ENCODE measurements at regions of chr3 and their contacts with region 1.

Region 1: GRCh38 chr3:33440323-33441232 is at the start of gene UBP1:
- DNase-seq: peak; percentile 100
- H3K4me3 ChIP-seq: peak within 1 kb of the TSS; percentile 69 to 90 (median 77)
- H3K27ac ChIP-seq: peak within 1 kb of the TSS; percentile 95 to 98 (median 97)
- H3K4me1 ChIP-seq: peaks cover 0 to 44% (median 39%) of the 10 kb centered on the region in 4 donors
- H3K27me3 ChIP-seq: no peaks in the 10 kb centered on the region
- CTCF ChIP-seq: no peak
- EP300 ChIP-seq: no peak
- POLR2A ChIP-seq: peak; percentile 77 to 83
- total RNA-seq, gene UBP1: 58.4 to 92.0 (median 62.8) TPM

Region 2: GRCh38 chr3:33096093-33096868 is 344.3 kb before region 1 on chr3:
- intact Hi-C with region 1: loop called (anchors 5 kb)
- DNase-seq: no peak
- H3K4me3 ChIP-seq: peak overlapping the region; percentile 88 to 99 (median 96)
- H3K27ac ChIP-seq: peak overlapping the region; percentile 93 to 99 (median 98)
- H3K4me1 ChIP-seq: peaks cover 0 to 15% (median 12%) of the 10 kb centered on the region in 4 donors
- H3K27me3 ChIP-seq: no peaks in the 10 kb centered on the region
- CTCF ChIP-seq: no peak
- EP300 ChIP-seq: no peak
- POLR2A ChIP-seq: no peak

Region 3: GRCh38 chr3:33113772-33114621 is 326.6 kb before region 1 on chr3 and contains the start of gene CRTAP:
- intact Hi-C with region 1: loop called (anchors 5 kb)
- DNase-seq: peak; percentile 99
- H3K4me3 ChIP-seq: peak within 1 kb of the TSS; percentile 60 to 92 (median 75)
- H3K27ac ChIP-seq: peak within 1 kb of the TSS; percentile 95 to 99 (median 99)
- H3K4me1 ChIP-seq: peaks cover 0 to 34% (median 20%) of the 10 kb centered on the region in 4 donors
- H3K27me3 ChIP-seq: no peaks in the 10 kb centered on the region
- CTCF ChIP-seq: no peak
- EP300 ChIP-seq: no peak
- POLR2A ChIP-seq: peak; percentile 26 to 29
- total RNA-seq, gene CRTAP: 245 to 509 (median 309) TPM

Region 4: DNA sequence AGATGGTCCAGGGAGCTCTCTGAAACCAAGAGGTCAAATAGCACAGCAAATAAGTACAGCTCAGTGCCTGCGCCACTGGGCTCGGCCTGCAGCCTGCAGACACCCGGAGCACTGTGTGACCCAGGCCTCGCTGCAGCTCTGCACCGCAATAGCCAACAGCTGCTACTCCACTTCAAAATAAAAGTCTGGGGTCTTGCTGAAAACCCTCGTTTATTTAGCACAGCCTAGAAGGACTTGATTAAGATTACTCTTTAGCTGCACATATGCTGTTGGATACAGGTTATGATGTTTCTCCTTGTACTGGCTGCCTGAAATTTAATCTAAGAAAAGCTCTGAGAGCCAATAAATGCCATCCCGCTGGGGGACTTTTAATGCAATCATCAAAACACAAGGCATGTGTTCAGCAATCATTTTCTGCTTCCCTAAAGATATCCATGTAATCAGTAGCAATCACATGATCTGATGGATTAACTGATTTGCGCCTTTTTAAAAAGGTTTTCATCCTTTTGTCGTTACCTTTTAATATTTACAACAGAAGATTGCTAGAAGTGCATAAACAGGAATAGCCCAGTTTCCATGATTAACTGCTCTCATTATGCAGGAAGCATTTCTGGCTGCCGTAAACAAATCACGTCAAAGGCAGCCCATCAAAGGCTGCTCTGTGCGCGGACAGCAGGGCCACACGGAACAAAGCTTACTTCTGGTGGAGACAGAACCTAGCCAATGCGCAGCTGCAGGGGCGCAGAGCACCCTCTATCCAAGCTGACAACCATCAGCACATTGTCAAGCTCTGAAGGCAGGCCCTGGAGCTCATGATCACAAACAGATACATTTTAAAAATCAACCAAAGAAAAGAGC is 218.6 kb after region 1 on chr3:
- intact Hi-C with region 1: loop called (anchors 10 kb)
- DNase-seq: peak; percentile 85
- H3K4me3 ChIP-seq: peak overlapping the region; percentile 32 to 59 (median 52)
- H3K27ac ChIP-seq: peak overlapping the region; percentile 74 to 81 (median 77)
- H3K4me1 ChIP-seq: peaks cover 0 to 52% (median 38%) of the 10 kb centered on the region in 4 donors
- H3K27me3 ChIP-seq: no peaks in the 10 kb centered on the region
- CTCF ChIP-seq: no peak
- EP300 ChIP-seq: no peak
- POLR2A ChIP-seq: peak in 1 of 2 donors; percentile 69

Region 5: DNA sequence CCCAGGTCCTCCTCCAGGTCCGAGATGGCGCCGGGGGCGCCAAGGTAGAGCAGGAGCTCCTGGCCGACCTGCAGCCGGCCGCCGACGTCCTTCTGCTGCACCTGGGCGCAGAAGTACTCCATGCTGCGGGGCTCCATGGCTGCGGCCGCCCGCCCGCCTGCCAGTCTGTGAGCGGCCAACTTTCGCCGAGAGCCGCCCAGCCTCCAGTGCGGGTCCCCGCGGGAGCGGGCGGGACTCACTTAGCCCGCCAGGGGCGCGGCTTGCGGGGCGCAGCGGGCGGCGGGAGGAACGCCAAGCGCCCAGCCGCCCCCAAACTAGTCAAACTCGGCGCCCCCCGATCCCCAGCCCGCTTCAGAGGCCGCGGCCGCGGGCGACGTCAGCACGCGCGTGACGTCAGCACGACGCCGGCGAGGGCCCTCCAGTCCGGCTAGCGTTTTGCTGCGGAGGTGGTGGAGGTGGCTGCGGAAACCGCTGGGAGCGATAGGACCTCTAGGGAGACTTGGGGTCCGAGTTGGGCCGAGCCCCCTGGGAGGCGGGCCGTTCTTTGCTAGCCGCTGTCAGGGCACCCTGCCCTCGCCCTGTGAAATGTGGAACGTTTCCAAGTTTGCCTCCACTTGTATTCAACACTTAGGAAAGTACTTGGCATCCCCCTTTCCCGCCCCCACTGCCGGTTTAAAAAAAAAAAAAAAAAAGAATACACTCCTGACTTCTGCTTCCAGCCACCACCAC is 277.5 kb after region 1 on chr3 and contains the start of gene CLASP2:
- intact Hi-C with region 1: loop called (anchors 5 kb)
- DNase-seq: peak; percentile 94
- H3K4me3 ChIP-seq: peak within 1 kb of the TSS; percentile 69 to 94 (median 83)
- H3K27ac ChIP-seq: peak within 1 kb of the TSS; percentile 96 to 99 (median 96)
- H3K4me1 ChIP-seq: peaks cover 0 to 16% (median 12%) of the 10 kb centered on the region in 4 donors
- H3K27me3 ChIP-seq: no peaks in the 10 kb centered on the region
- CTCF ChIP-seq: no peak
- EP300 ChIP-seq: no peak
- POLR2A ChIP-seq: peak; percentile 31
- total RNA-seq, gene CLASP2: 77.7 to 122 (median 94.5) TPM

Region 6: DNA sequence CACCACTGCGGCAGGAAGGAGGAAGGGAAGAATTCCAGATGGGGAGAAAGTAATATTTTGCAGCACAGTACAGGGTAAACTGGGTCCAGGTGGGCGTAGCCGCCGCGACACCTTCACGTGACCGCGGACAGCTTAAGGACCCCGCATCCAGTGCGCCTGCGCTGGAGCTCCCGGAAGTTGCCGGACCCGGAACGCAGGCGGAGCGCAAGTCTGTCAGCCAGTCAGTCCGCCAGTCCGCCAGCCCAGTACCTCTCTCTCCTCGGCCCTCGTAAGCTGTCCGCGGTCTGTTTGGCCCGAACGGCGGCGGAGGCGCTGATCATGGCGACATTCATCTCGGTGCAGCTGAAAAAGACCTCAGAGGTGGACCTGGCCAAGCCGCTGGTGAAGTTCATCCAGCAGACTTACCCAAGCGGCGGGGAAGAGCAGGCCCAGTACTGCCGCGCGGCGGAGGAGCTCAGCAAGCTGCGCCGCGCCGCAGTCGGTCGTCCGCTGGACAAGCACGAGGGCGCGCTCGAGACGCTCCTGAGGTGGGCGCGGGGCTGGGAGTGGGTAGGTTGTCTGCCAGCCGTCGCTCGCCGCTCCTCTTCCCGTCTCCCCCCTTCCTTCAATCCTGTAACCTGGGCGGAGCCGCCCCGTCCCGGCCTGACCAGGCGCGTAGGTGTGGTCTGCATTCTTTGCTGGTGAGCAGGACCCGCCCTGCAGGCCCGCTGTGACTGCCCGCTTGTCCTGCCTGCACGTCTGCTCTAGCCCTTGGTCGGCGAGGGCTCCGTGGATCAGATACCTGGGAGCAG is 358.0 kb after region 1 on chr3 and contains the start of gene PDCD6IP:
- intact Hi-C with region 1: loop called (anchors 2 kb)
- DNase-seq: peak; percentile 96
- H3K4me3 ChIP-seq: peak within 1 kb of the TSS; percentile 58 to 92 (median 72)
- H3K27ac ChIP-seq: peak within 1 kb of the TSS; percentile 90 to 97 (median 93)
- H3K4me1 ChIP-seq: peaks cover 0 to 44% (median 39%) of the 10 kb centered on the region in 4 donors
- H3K27me3 ChIP-seq: no peaks in the 10 kb centered on the region
- CTCF ChIP-seq: peak in 1 of 4 experiments; percentile 37
- EP300 ChIP-seq: no peak
- POLR2A ChIP-seq: peak; percentile 76 to 91
- total RNA-seq, gene PDCD6IP: 77.1 to 125 (median 114) TPM